Sigmoid colon (tissue), 7 donors: ENCODE measurements at regions of chr19 and their contacts with region 1.

Region 1: GRCh38 chr19:17245244-17245984 is at the start of gene NR2F6:
- DNase-seq: no peak
- H3K4me3 ChIP-seq: peak within 1 kb of the TSS; percentile 62 to 95 (median 84)
- H3K27ac ChIP-seq: peak within 1 kb of the TSS; percentile 84 to 88 (median 84)
- H3K4me1 ChIP-seq: peaks cover 0 to 45% (median 34%) of the 10 kb centered on the region in 4 donors
- H3K27me3 ChIP-seq: no peaks in the 10 kb centered on the region
- CTCF ChIP-seq: no peak
- EP300 ChIP-seq: no peak
- POLR2A ChIP-seq: no peak
- total RNA-seq, gene NR2F6: 21.6 to 32.6 (median 27.8) TPM

Region 2: DNA sequence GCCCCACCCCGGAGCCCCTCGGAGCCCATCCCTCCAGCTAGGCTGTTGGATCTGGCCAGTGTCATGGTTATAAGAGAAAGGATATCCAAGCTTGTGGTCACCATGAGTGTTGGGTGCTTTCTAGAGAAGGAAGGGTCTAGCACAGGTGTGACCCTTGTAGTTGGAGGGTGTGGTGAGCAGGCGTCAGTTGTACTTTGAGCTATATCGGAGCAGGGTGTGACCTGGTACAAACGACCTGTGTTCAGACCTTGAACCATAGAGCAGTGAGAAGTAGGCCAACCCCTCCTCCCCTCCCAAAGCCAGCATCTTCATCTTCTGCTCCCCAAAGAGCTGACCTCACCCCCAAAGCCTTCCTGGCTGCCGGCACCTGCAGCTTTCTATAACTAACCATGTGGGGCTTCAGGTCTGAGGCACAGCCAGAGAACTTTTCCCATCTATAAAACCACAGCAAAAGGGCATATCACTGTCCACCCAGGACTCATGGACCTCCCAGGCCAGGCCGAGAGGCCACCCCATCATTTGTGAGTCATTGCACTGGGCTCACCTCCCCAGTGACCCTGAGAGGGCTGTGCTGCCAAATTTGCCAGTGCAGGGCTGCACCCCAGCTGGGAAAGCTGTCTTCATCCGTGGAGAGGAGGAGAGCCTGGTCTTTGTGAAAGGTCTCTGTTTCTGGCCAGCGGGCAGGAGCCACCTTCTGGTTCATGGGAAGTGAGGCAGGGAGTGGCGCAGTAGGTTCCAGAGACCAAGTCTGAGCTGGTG is 1119.5 kb before region 1 on chr19:
- intact Hi-C with region 1: no loop called
- DNase-seq: no peak
- H3K4me3 ChIP-seq: no peak overlapping the region
- H3K27ac ChIP-seq: no peak overlapping the region
- H3K4me1 ChIP-seq: no peaks in the 10 kb centered on the region
- H3K27me3 ChIP-seq: no peaks in the 10 kb centered on the region
- CTCF ChIP-seq: no peak
- EP300 ChIP-seq: no peak
- POLR2A ChIP-seq: no peak

Region 3: DNA sequence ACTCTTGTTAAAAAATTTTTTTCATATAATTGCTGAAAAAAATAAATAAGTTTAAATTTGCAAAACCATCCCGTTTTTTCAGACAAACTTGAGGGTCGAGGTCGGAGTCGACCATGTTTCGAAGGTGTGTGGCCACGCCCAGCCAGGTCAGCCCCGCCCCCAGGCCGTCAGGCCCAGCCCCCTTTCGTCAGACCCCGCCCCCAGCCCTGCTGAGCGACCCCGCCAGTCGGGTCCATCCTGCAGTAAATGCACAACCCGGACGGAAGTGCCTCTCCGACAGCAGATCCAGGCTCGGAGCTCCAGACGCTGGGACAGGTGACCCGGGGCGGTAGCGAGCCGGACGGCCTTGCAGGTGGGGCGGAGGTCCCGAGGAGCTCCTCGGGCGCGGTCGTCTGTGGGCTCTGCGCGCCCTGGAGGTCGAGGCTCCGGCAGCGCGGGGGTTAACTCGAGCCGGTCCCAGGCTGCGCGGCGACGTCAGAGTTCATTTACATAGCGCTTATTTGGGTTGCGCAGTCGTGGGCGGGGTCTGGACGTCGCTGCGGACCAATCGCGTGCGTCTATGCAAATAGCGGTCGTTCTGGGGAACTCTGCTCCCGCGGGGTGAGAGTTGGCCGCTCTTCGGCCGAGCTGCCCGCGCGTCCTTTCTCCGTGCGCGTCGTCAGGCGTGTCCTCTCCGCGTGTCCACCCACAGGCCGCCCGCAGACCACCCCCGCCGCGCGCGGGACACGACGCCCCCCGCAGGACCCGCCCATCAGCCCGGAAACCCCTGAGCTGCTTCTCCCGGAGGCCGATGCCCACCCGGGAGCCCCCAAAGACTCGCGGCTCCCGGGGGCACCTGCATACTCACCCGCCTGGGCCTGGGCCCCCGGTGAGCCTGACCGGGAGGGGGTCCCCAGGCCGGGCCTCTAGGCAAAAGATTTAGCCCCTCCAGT is 19.1 kb before region 1 on chr19 and contains the start of gene OCEL1:
- intact Hi-C with region 1: loop called (anchors 2 kb)
- DNase-seq: peak; percentile 100
- H3K4me3 ChIP-seq: peak within 1 kb of the TSS; percentile 62 to 74 (median 64)
- H3K27ac ChIP-seq: peak within 1 kb of the TSS; percentile 85 to 94 (median 87)
- H3K4me1 ChIP-seq: peaks cover 0 to 22% (median 16%) of the 10 kb centered on the region in 4 donors
- H3K27me3 ChIP-seq: no peaks in the 10 kb centered on the region
- CTCF ChIP-seq: no peak
- EP300 ChIP-seq: peak in 2 of 4 donors; percentile 12 to 15
- POLR2A ChIP-seq: peak; percentile 54 to 55
- total RNA-seq, gene OCEL1: 7.5 to 15.8 (median 9.6) TPM

Region 4: DNA sequence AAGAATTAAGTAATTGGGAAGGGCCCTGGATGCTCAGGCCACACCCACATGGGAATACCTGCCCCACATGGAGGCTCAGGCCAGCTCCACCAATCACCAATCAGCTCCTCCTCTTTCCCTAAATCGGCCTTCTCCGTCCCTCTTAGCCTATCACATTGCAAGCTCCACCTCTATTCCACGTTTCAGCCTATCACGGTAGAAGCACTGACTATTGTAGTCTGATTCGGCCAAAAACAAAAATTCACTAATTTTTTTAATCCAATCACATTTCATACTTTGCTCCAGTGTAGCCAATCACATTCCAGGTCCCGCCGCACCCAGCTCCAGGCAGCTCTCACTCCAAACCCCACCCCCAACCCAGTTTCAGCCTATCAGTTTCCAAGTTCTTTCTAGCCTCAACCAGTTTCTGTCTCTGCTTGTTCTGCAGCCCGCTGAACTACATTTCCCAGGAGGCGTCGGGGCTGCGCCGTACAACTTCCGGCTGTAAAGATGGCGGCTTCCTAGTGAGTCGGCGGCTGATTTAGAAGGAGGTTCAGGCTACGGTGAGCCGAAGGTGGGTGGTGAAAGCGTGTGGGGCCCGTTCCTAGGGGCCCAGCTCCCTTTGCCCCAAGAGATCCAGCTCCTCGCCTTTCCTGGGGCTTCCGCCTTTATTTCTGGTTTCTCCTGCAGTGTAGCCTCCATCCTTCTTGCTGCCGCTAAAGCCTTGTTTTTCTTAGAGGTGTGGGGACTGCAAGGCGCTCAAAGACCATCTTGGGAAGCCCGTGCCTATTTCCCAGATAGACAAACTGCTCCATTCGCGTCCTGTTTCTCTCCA is 21.8 kb after region 1 on chr19 and contains the start of gene BABAM1:
- intact Hi-C with region 1: loop called (anchors 2 kb)
- DNase-seq: peak; percentile 98
- H3K4me3 ChIP-seq: peak within 1 kb of the TSS; percentile 61 to 92 (median 75)
- H3K27ac ChIP-seq: peak within 1 kb of the TSS; percentile 80 to 86 (median 80)
- H3K4me1 ChIP-seq: peaks cover 0 to 13% (median 11%) of the 10 kb centered on the region in 4 donors
- H3K27me3 ChIP-seq: no peaks in the 10 kb centered on the region
- CTCF ChIP-seq: no peak
- EP300 ChIP-seq: no peak
- POLR2A ChIP-seq: peak in 1 of 2 donors; percentile 7
- total RNA-seq, gene BABAM1: 90.0 to 101 (median 98.7) TPM

Region 5: DNA sequence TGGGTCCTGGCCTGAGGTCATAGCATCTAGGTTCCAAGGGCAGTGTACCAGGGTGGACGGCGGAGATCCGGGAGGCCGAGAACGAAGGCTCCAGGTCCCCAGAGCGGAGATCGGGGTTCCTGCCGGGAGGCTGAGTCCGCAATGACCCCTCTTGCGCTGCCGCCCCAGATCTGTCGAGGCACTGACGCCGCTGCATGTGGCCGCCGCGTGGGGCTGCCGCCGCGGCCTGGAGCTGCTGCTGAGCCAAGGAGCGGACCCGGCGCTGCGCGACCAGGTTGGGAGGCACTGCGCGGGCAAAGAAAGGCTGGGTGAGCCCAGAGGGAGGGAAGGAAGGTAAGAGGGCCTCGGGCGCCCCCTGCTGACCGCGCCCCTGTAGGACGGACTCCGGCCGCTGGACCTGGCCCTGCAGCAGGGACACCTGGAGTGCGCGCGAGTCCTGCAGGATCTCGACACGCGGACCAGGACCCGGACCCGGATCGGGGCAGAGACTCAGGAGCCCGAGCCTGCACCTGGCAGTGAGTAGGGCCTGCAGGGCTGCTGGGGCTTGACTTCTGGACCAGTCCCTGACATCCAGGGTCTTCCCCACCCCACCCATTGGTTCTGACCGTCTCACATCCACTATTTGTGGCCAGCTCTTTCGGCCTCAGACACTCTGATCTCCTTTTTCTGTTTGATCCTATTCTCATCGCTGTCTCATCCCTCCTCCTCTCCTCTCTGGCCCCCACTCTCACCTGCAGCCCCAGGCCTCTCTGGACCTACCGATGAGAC is 37.3 kb after region 1 on chr19:
- intact Hi-C with region 1: loop called (anchors 5 kb)
- DNase-seq: peak; percentile 89
- H3K4me3 ChIP-seq: peak overlapping the region in 3 of 4 donors; percentile 13 to 39 (median 35)
- H3K27ac ChIP-seq: no peak overlapping the region
- H3K4me1 ChIP-seq: peaks cover 0 to 18% (median 15%) of the 10 kb centered on the region in 4 donors
- H3K27me3 ChIP-seq: peaks cover 11 to 15% (median 15%) of the 10 kb centered on the region in 3 donors
- CTCF ChIP-seq: peak; percentile 75 to 91 (median 82)
- EP300 ChIP-seq: no peak
- POLR2A ChIP-seq: no peak

Region 6: GRCh38 chr19:17294051-17294891 is 48.9 kb after region 1 on chr19:
- intact Hi-C with region 1: no loop called
- DNase-seq: no peak
- H3K4me3 ChIP-seq: no peak overlapping the region
- H3K27ac ChIP-seq: no peak overlapping the region
- H3K4me1 ChIP-seq: peaks cover 0 to 17% (median 14%) of the 10 kb centered on the region in 4 donors
- H3K27me3 ChIP-seq: no peaks in the 10 kb centered on the region
- CTCF ChIP-seq: no peak
- EP300 ChIP-seq: no peak
- POLR2A ChIP-seq: no peak

Region 7: DNA sequence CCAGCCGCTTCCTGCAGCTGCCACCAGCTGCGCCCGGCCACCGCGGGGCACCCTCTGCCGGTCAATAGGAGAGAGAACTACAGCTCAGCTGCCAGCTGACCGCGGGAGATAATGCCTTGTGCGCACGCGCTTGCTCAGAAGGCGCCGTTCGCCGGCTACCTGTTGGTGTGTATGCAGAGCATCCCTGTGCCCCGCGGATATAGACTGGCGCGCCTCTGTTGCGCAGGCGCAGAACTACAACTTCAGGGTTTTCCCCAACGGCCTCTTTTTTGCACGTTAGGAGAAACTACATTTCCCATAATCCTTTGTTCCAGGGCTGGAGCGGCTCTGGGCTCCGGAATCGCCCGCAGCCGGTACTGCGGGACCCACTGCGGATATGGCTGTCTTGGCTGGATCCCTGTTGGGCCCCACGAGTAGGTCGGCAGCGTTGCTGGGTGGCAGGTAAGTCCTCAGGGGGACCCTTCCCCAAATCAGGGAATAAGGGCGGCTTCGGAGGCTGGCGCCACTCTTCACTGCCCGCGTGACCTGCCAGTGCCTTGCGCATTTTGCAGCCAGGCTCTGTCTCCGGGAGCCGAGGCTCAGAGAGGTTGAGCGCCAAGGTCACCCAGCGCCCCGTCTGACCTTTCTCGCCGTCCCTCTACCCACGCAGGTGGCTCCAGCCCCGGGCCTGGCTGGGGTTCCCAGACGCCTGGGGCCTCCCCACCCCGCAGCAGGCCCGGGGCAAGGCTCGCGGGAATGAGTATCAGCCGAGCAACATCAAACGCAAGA is 60.3 kb after region 1 on chr19 and contains the start of gene MRPL34:
- intact Hi-C with region 1: loop called (anchors 5 kb)
- DNase-seq: peak; percentile 99
- H3K4me3 ChIP-seq: peak within 1 kb of the TSS; percentile 67 to 78 (median 72)
- H3K27ac ChIP-seq: peak within 1 kb of the TSS; percentile 92 to 97 (median 94)
- H3K4me1 ChIP-seq: peaks cover 0 to 75% (median 66%) of the 10 kb centered on the region in 4 donors
- H3K27me3 ChIP-seq: no peaks in the 10 kb centered on the region
- CTCF ChIP-seq: peak; percentile 71 to 93 (median 84)
- EP300 ChIP-seq: peak in 1 of 4 donors; percentile 4
- POLR2A ChIP-seq: peak; percentile 53 to 59
- total RNA-seq, gene MRPL34: 174 to 390 (median 267) TPM